ENCODE measurements at regions of chr18 and their contacts with region 1.

Region 1: DNA sequence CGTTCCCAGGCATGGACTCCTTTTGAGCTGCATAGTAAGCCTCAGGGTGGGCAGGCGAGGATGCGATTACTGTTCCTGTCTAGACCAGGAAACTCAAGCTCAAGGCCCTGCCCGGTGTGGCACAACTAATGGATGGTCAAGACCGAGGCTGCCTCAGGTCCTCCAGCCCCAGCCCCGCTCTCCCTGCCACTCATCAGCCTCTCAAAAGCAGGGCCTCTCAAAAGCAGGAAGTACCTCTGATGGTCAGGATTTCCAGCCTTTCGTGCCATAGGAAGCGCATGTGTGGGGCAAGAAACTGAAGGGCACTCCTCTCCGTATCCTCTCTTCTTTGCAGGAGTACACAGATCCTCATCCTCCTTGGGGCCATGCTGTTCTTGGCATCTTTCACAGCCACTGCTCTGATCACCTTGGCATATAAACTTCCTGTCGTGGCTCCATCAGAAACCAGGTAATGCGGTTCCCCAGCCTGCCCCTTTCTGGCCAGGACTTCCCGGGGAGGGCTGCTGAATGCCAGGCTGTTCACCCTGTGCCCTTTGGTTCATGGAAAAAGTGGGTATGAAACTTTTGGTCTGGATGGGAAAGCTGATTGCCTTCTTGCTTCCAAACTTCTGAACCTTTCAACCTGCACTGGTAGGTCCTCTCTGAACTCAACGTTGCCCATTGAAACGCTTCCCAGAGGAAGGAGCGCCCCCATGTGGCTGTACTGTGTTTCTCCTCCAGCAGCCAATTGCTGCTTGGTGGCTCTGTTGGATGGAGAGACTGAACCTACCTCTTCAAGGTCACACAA is 82.8 kb upstream of the SEC11C start:
- DNase-seq: peak; percentile 76
- H3K4me3 ChIP-seq: no peak overlapping the region
- H3K27ac ChIP-seq: no peak overlapping the region
- H3K4me1 ChIP-seq: no peaks in the 10 kb centered on the region
- H3K27me3 ChIP-seq: peaks cover 0 to 3% of the 10 kb centered on the region in 2 experiments
- CTCF ChIP-seq: peak; percentile 77 to 87
- POLR2A ChIP-seq: no peak

Region 2: DNA sequence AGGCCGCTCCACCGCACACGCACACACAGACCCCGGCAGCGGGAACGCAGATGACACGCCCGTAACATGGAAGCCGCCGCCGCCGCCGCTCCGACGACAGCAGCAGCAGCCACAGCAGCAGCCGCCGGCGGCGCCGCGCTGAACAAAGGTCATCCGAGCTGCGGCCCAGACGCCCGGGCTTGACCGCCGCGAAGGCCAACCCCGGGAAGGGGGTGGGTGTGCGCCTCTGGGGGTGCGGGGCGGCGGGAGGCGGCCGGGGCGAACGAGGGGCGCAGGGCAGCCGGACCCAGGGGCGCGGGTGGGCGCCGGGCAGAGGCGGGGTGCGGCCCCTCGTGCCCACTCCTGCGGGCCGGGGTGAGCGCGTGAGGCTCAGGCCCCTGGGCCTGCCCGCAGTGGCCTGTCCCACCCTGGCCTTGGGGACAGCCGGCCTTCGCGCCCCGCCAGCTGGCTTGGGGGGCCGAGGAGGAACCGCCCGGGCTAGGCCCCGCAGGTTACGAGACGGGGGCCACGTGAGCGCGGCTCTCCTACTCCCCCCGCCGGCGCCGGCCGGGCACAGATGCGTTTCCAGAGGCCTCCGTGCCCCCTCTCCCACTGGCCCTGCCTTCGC is 193.3 kb before region 1 on chr18:
- CTCF ChIA-PET with region 1: interaction called, 3 read pairs
- POLR2A ChIA-PET with region 1: no interaction called
- dilution Hi-C with region 1: no loop called
- intact Hi-C with region 1: loop called (anchors 2 kb)
- DNase-seq: peak; percentile 31
- H3K4me3 ChIP-seq: peak overlapping the region in 1 of 3 experiments; percentile 39
- H3K27ac ChIP-seq: peak overlapping the region; percentile 77
- H3K4me1 ChIP-seq: peaks cover 38% of the 10 kb centered on the region
- H3K27me3 ChIP-seq: no peaks in the 10 kb centered on the region
- CTCF ChIP-seq: peak in 1 of 2 donors; percentile 27
- POLR2A ChIP-seq: no peak

Region 3: DNA sequence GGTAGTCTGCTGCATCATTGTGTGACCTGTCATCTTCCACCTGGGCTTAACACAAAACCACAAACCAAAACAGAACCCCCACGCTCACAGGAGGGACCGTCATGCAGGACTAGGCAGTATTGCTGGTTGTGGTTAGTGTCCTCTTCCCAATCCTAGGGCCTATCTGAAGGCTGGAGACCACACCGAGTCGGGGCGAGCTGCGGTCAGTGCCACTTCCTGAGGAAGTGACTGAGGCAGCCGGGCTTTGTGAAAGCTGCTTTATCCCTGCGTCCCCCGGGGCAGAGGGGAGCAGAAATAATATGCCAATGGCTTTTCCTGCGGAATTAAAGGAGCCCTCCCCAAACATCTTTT is 169.3 kb before region 1 on chr18:
- CTCF ChIA-PET with region 1: no interaction called
- POLR2A ChIA-PET with region 1: no interaction called
- dilution Hi-C with region 1: no loop called
- intact Hi-C with region 1: loop called (anchors 1 kb)
- DNase-seq: peak; percentile 78
- H3K4me3 ChIP-seq: no peak overlapping the region
- H3K27ac ChIP-seq: peak overlapping the region; percentile 43
- H3K4me1 ChIP-seq: peaks cover 18% of the 10 kb centered on the region
- H3K27me3 ChIP-seq: no peaks in the 10 kb centered on the region
- CTCF ChIP-seq: no peak
- POLR2A ChIP-seq: peak; percentile 42

Region 4: DNA sequence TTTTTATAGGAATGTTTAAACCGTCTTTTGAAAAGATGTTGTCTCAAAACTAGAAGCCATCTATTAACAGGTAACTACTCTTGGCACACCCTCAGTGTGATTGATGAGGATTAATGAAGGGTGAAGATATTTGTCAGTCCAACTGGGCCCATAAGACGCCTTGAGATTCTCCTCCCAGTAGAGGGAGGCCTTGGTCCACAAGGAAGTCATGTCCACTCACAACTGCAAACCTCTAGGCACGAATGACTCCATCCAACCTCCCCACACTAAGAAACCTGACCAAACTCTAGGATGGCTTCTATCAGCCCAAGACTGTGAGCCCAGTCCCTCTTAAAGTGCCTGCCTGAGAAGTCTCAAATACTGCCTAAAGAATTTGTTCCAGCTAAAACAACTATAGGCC is 143.9 kb after region 1 on chr18:
- CTCF ChIA-PET with region 1: no interaction called
- POLR2A ChIA-PET with region 1: no interaction called
- dilution Hi-C with region 1: no loop called
- intact Hi-C with region 1: no loop called
- DNase-seq: no peak
- H3K4me3 ChIP-seq: no peak overlapping the region
- H3K27ac ChIP-seq: no peak overlapping the region
- H3K4me1 ChIP-seq: no peaks in the 10 kb centered on the region
- H3K27me3 ChIP-seq: no peaks in the 10 kb centered on the region
- CTCF ChIP-seq: no peak
- POLR2A ChIP-seq: no peak

Measured in endothelial cell of umbilical vein (primary cell).